ENCODE measurements at regions of chr9 and their contacts with region 1.

Region 1: DNA sequence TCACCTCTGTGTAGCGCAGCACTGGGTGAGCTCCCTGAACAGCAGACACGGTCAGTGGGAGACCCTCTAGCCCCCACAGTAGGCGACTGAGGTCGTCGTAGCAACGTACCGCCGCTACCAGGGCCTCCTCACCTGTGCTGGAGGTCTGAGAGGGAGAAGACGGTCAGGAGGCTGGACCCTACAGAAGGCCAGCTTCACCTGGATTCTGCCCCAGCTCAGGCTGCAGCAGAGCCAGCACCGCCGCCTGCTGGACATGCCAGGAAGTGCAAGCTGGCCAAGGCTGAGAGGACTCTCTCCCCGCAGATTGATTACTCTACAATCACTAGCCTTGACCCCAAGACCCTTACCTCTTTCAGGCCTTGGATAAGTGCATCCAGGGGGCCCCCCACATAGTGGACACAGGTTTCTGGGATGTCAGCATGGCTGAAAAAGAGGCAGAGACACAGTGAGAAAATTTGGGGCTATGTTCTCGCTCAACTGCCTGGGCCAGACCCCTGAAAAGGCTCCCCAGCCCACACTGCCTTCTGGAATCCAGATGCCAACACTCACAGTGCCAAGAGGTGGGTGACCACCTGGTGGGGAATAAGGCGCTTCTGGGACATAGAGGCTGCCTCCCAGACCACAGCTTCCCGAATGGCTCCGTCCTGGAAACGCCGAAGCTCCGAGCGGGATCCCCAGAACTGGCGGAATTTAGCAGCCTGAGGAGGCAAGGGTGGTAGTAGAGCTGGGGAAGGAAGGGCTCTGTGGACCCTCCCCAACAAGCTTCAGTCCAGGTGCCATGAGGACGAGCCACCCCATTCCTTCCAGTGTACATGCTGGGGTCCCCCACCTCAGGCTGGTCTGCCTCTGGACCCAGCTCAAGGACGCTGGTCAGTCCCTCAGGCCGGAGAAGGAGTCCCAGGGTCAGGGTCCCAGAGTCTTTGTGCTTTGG is 6.9 kb downstream of the NOL6 start:
- DNase-seq: peak; percentile 36 to 68
- H3K4me3 ChIP-seq: no peak overlapping the region
- H3K27ac ChIP-seq: no peak overlapping the region
- H3K4me1 ChIP-seq: no peaks in the 10 kb centered on the region
- H3K27me3 ChIP-seq: no peaks in the 10 kb centered on the region
- CTCF ChIP-seq: peak; percentile 92

Region 2: GRCh38 chr9:33290247-33291030 is 176.4 kb before region 1 on chr9 and contains the start of gene NFX1:
- CTCF ChIA-PET with region 1: no interaction called
- POLR2A ChIA-PET with region 1: interaction called, 6 read pairs
- intact Hi-C with region 1: loop called (anchors 2 kb)
- DNase-seq: peak; percentile 84 to 90
- H3K4me3 ChIP-seq: peak within 1 kb of the TSS; percentile 75
- H3K27ac ChIP-seq: peak within 1 kb of the TSS; percentile 95
- H3K4me1 ChIP-seq: no peaks in the 10 kb centered on the region; the same call in 1 of the 2 replicates
- H3K27me3 ChIP-seq: no peaks in the 10 kb centered on the region
- CTCF ChIP-seq: no peak
- total RNA-seq, gene NFX1: 14.9 and 15.0 TPM in 2 replicates

Region 3: GRCh38 chr9:33403941-33404787 is 62.7 kb before region 1 on chr9:
- CTCF ChIA-PET with region 1: interaction called, 3 read pairs
- POLR2A ChIA-PET with region 1: no interaction called
- intact Hi-C with region 1: loop called (anchors 1 kb)
- DNase-seq: no peak
- H3K4me3 ChIP-seq: no peak overlapping the region
- H3K27ac ChIP-seq: no peak overlapping the region
- H3K4me1 ChIP-seq: no peaks in the 10 kb centered on the region
- H3K27me3 ChIP-seq: no peaks in the 10 kb centered on the region
- CTCF ChIP-seq: no peak

Measured in PC-9 (cell line).